Activated CD4-positive, alpha-beta T cell treated with anti-CD3 and anti-CD28 coated beads, Interleukin-2, amount 10 ng/mL, durations not matched to agents 24 days and 14 days (primary cell): ENCODE measurements at regions of chr17 and their contacts with region 1.

Region 1: GRCh38 chr17:63827002-63827771 is at the starts of genes FTSJ3 and PSMC5:
- DNase-seq: peak; percentile 99
- H3K4me3 Mint-ChIP-seq: peak within 1 kb of the TSS; percentile 99
- H3K27ac Mint-ChIP-seq: peak within 1 kb of the TSS; percentile 99
- H3K4me1 Mint-ChIP-seq: peaks cover 63% of the 10 kb centered on the region
- H3K27me3 Mint-ChIP-seq: no peaks in the 10 kb centered on the region
- total RNA-seq, gene FTSJ3: 99.6 and 100 TPM in 2 replicates
- total RNA-seq, gene PSMC5: 189 and 199 TPM in 2 replicates

Region 2: GRCh38 chr17:63842540-63843386 is 15.6 kb after region 1 on chr17 and contains the start of gene SMARCD2:
- intact Hi-C with region 1: loop called (anchors 1 kb)
- DNase-seq: peak; percentile 99
- H3K4me3 Mint-ChIP-seq: peak within 1 kb of the TSS; percentile 98
- H3K27ac Mint-ChIP-seq: peak within 1 kb of the TSS; percentile 93
- H3K4me1 Mint-ChIP-seq: peaks cover 27% of the 10 kb centered on the region
- H3K27me3 Mint-ChIP-seq: no peaks in the 10 kb centered on the region
- total RNA-seq, gene SMARCD2: 120 and 121 TPM in 2 replicates

Region 3: DNA sequence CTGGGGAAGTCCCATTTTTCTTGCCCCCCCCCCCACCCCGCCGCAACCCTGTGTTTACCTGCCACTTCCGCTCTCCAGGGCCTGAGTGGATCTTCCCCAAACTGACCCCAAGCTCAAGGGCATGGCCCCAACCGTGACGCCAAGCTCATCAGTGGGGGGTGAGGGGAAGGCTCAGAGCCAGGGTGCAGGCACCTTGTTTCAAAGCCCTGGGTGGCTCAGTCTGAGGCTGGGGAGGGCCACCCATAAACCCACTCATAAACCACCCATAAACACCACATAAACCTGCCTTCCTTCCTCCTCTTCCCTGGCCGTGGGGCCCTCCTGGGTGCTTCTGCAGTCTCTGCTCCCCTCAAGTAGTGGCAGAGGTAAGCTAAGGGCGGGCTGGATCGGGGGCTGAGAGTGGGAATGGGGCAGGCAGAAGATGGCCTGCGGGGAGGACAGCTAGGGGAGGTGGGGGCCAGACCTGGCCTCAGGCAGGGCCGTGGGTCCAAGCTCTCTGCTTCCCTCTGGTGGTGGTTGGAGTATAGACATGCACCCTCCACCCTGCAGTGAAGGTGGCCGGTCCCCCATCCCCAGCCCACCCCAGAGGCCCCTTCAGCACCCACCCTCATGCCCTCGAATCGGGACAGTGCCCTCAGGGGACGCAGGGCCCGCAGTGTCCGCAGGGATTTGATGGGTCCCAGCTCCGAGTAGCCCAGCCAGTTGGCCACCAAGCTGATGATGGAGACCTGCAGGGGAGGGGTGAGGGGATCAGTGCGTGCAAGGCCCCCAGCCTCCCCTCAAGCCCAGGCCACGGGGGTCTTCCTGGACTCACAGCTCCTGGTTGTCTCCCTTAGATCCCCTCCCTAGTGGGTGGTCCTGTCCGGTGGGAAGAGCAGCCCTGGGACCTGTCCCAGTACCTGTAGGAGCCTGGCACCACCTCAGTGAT is 119.5 kb after region 1 on chr17:
- intact Hi-C with region 1: no loop called
- DNase-seq: peak; percentile 90
- H3K4me3 Mint-ChIP-seq: peak overlapping the region; percentile 71
- H3K27ac Mint-ChIP-seq: peak overlapping the region; percentile 74
- H3K4me1 Mint-ChIP-seq: peaks cover 11% of the 10 kb centered on the region
- H3K27me3 Mint-ChIP-seq: peaks cover 4% of the 10 kb centered on the region

Region 4: DNA sequence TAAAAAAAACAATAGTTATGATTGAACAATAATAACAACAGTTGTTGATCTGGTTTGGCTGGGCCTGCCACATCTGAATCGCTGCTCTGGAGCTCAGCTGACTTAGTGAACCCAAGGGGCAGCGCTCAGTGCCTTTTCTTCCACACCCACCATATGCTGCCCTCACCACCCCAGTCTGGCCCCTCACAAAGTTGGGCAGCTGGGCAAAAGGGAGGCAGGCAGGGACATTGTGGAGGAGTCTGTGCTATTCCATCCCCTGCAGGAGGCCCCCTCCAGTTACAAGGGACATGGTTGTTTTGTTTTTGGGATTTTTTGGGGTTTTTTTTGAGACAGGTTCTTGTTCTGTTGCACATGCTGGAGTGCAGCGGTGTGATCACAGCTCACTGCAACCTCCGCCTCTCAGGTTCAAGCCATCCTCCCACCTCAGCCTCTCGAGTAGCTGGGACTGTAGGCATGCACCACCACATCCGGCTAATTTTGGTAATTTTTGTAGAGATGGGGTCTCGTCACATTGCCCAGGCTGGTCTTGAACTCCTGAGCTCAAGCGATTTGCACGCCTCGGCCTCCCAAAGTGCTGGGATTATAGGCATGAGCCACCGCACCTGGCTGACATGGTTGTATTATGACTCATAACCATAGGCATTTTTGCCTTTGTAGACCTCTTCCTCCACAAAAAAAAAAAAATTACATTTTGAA is 572.0 kb after region 1 on chr17:
- intact Hi-C with region 1: no loop called
- DNase-seq: no peak
- H3K4me3 Mint-ChIP-seq: no peak overlapping the region
- H3K27ac Mint-ChIP-seq: no peak overlapping the region
- H3K4me1 Mint-ChIP-seq: peaks cover 27% of the 10 kb centered on the region
- H3K27me3 Mint-ChIP-seq: no peaks in the 10 kb centered on the region